MCF 10A (cell line): ENCODE measurements at regions of chr5 and their contacts with region 1.

Region 1: DNA sequence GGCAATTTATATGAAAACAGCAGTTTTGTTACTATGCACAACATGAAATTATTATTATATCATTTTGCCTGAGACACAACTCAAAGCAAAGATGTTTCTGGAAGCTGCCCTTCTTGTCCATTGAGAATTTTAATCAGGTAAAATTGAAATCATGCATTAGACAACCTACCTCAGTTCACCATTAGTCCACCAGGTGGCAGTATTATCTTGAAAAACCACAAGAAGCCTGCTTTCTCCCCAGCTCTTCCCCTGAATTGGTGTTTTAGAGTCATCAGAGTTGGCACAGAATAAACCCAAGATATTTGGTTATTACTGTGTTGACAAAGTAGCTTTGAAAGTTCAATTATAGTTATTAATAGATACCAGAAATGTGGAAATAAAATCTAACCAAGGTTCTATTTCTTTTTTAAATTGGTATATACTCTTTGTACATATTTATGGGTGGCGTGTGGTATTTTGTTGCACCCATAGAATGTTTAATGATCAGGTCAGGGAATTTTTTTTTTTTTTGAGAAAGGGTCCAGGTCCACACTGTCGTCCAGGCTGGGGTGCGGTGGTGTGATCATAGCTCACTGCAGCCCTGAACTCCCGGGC is 25.7 kb downstream of the UTP15 start:
- DNase-seq: peak; percentile 84
- H3K4me3 Mint-ChIP-seq: no peak overlapping the region
- H3K27ac Mint-ChIP-seq: no peak overlapping the region
- H3K4me1 Mint-ChIP-seq: peaks cover 14% of the 10 kb centered on the region
- H3K27me3 Mint-ChIP-seq: no peaks in the 10 kb centered on the region
- CTCF ChIP-seq: peak; percentile 64

Region 2: DNA sequence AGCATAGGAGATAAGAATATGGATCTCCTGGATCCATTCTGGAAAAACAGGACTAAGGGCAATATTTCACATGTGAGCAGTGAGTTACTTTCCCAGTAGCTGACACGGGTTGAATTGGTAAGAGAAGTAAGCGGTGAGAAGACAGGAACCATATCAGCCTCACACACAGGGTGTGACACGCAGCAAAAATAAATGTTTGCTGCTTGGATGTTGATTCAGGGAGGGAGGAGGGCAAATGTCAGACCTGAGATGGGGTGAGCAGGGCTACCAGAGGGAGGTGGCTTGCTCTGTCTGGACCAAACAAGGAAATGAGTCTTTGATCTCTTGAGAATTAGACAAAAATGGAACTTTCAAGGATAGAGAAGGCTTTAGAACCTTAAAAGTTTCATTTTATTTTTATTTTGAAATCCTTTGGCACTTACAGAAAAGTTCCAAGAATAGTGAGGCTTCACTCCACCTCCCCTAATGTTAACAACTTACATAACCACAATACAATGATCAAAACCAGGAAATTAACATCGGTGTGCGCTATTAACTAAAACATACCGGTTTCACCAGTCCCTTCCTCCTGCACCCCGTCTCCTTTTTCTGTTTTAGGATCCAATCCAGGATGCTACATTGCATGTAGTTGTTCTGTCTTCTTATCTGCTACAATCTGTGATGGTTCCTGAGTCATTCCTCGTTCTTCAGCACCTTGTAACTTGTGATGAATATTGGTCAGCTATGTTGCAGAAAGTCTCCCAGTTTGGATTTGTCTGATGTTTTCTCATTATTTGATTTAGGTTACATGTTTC is 14.2 kb after region 1 on chr5:
- CTCF ChIA-PET with region 1: interaction called, 24 read pairs
- POLR2A ChIA-PET with region 1: interaction called, 3 read pairs
- intact Hi-C with region 1: no loop called
- DNase-seq: no peak
- H3K4me3 Mint-ChIP-seq: no peak overlapping the region
- H3K27ac Mint-ChIP-seq: peak overlapping the region; percentile 67
- H3K4me1 Mint-ChIP-seq: peaks cover 24% of the 10 kb centered on the region
- H3K27me3 Mint-ChIP-seq: no peaks in the 10 kb centered on the region
- CTCF ChIP-seq: no peak

Region 3: GRCh38 chr5:73783828-73784227 is 192.6 kb after region 1 on chr5:
- CTCF ChIA-PET with region 1: interaction called, 298 read pairs
- POLR2A ChIA-PET with region 1: interaction called, 3 read pairs
- intact Hi-C with region 1: no loop called
- DNase-seq: no peak
- H3K4me3 Mint-ChIP-seq: no peak overlapping the region
- H3K27ac Mint-ChIP-seq: peak overlapping the region; percentile 3
- H3K4me1 Mint-ChIP-seq: peaks cover 13% of the 10 kb centered on the region
- H3K27me3 Mint-ChIP-seq: no peaks in the 10 kb centered on the region
- CTCF ChIP-seq: peak; percentile 30

Region 4: DNA sequence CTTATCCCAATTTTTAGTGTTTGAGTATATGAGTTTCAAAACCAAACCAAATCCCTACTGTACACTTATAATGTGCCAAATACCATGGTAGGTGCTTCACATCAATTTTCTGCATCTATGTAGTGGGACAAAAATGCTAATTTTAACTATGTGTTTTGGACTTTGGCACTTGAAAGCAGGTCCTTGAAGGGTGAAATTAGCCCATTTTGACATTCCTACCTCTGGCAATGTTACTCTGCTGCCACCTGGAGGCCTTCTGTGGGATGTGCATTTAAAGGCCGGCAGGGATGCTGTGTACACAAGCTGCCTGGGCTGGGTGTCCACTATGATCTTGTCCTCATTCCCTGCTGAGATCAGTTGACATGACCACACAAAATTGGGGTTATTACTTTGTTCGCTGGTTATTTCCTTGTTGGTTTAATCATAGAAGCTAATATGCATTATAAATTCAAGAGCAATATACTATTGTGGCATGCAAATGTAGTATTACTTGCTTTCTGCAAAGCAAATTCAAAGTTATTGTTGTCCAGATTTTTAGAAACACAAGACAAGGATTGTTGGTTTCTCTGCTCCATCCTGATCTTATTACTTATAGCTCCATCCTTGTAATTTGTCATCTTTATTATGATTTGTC is 201.6 kb after region 1 on chr5:
- CTCF ChIA-PET with region 1: interaction called, 298 read pairs
- POLR2A ChIA-PET with region 1: interaction called, 21 read pairs
- intact Hi-C with region 1: loop called (anchors 1 kb)
- DNase-seq: peak; percentile 79
- H3K4me3 Mint-ChIP-seq: no peak overlapping the region
- H3K27ac Mint-ChIP-seq: no peak overlapping the region
- H3K4me1 Mint-ChIP-seq: peaks cover 13% of the 10 kb centered on the region
- H3K27me3 Mint-ChIP-seq: no peaks in the 10 kb centered on the region
- CTCF ChIP-seq: peak; percentile 96

Region 5: DNA sequence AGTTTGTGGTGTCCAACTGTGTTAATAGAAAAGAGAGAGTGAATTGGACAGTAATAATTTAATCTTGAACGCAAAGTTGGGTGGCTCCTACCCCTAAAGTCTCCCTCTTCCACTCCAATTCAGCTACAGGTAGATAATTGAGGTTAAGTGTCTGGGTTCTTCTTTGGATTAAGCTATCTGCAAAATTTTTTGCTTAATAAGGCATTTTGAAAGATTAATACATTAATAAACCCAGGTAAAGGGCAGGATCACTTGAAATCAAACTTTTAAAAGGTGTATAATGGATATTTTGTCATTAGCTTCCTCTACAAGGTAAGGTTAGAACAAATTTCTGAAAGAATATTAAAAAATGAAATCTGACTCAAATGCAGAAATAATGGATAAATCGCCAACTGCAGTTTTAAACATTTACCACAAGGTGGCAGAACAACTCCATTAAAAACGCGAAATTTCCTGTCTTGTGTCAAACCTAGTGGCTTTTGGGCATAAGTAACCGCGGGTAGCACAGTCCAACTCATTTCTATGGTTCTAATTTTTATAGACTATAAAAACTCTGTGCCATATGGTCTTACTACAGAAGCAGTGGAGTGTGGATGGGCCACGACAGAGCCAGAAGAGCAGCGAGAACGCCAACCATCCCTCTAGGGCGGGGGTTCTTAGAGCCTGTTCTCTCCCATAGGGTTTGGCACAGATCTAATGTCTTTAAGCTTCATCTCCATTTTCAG is 311.3 kb after region 1 on chr5:
- CTCF ChIA-PET with region 1: no interaction called
- POLR2A ChIA-PET with region 1: interaction called, 3 read pairs
- intact Hi-C with region 1: loop called (anchors 2 kb)
- DNase-seq: peak; percentile 75
- H3K4me3 Mint-ChIP-seq: no peak overlapping the region
- H3K27ac Mint-ChIP-seq: peak overlapping the region; percentile 74
- H3K4me1 Mint-ChIP-seq: peaks cover 15% of the 10 kb centered on the region
- H3K27me3 Mint-ChIP-seq: no peaks in the 10 kb centered on the region
- CTCF ChIP-seq: peak; percentile 59

Region 6: DNA sequence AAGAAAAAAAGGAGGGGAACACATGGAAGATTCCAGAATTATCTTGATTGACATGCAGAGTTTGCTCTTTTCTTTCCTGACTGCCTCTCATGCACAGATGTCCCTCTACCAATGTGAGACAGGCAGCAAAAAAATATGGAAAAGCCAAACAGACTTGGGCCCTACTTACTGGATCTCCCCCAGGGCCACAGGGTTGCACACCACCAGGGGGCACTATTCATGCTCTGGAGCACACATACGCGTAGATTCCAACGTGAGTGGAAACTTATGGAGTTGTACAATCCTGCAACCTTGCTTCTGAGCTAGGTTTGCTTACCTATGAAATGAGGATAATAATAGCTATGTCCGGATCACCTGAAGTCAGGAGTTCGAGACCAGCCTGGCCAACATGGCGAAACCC is 354.3 kb after region 1 on chr5:
- CTCF ChIA-PET with region 1: no interaction called
- POLR2A ChIA-PET with region 1: no interaction called
- intact Hi-C with region 1: no loop called
- DNase-seq: no peak
- H3K4me3 Mint-ChIP-seq: no peak overlapping the region
- H3K27ac Mint-ChIP-seq: no peak overlapping the region
- H3K4me1 Mint-ChIP-seq: peaks cover 24% of the 10 kb centered on the region
- H3K27me3 Mint-ChIP-seq: no peaks in the 10 kb centered on the region
- CTCF ChIP-seq: peak; percentile 45

Region 7: GRCh38 chr5:74035521-74035981 is 444.4 kb after region 1 on chr5:
- CTCF ChIA-PET with region 1: interaction called, 3 read pairs
- POLR2A ChIA-PET with region 1: no interaction called
- intact Hi-C with region 1: loop called (anchors 10 kb)
- DNase-seq: peak; percentile 82
- H3K4me3 Mint-ChIP-seq: peak overlapping the region; percentile 66
- H3K27ac Mint-ChIP-seq: peak overlapping the region; percentile 11
- H3K4me1 Mint-ChIP-seq: peaks cover 37% of the 10 kb centered on the region
- H3K27me3 Mint-ChIP-seq: no peaks in the 10 kb centered on the region
- CTCF ChIP-seq: peak; percentile 45

Region 8: DNA sequence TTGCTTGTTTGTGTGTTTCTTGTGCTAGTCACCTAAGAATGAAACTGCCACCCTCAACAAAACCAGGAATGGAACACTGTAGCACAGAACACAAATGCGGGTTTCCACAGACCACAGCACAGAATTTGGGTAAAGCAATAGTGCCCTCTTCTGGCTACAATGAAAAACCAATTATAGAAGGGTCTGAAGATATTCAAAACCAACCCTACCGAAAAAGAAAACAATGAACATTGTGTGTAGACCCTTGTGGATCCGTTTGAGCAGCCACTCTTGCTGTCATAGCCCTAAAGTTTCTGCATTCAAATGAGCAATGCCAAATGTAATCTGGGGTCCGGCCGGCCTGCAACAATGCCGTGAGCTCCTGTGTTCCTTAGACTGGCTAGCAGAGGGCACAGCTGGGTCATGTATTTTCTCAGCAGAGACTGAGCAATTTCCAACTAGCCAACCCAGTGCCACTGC is 1057.7 kb after region 1 on chr5:
- CTCF ChIA-PET with region 1: interaction called, 7 read pairs
- POLR2A ChIA-PET with region 1: no interaction called
- intact Hi-C with region 1: loop called (anchors 1 kb)
- DNase-seq: peak; percentile 71
- H3K4me3 Mint-ChIP-seq: no peak overlapping the region
- H3K27ac Mint-ChIP-seq: no peak overlapping the region
- H3K4me1 Mint-ChIP-seq: peaks cover 16% of the 10 kb centered on the region
- H3K27me3 Mint-ChIP-seq: no peaks in the 10 kb centered on the region
- CTCF ChIP-seq: peak; percentile 68